ENCODE measurements at regions of chr22 and their contacts with region 1.

Region 1: DNA sequence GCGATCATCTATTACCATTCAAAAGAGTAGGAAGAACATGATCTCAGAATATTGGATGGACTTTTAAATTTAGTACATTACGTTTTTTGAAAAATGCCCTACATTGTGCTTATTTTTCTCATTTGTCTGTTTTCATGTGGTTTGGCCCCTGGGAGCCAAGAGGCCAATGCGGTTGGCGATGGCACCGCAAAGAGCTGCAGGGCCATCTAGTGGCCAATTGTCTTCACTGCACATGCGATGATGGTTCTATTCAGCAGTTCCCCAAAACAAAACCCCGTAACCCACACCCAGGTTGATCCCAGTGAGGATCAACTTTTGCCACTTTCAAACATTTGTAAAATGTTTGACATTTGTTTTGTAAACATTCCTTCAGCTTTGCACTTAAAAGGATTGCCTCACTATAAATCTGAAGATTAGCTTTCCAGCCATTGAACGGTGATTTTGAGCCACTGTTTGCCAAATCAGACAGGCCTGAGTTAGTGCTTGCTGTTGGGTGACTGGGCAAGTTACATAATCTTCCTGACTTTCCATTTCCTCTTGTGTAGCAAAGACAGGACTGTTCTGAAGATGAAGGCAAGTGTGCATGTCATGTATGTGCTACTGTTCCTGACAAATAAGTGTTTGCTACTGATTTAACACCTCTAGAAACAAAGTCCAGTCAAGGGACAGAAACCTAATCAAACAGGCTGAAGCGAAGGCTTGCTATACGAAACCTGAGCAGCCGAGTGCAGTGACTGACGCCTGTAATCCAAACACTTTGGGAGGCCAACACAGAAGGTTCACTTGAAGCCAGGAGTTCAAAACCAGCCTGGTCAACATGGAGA is 29.2 kb upstream of the XBP1 start:
- DNase-seq: peak; percentile 77
- H3K4me3 ChIP-seq: peak overlapping the region in 1 of 2 experiments; percentile 31; a peak in 1 of 4 replicates
- H3K27ac ChIP-seq: no peak overlapping the region
- H3K4me1 ChIP-seq: no peaks in the 10 kb centered on the region
- H3K27me3 ChIP-seq: no peaks in the 10 kb centered on the region
- CTCF ChIP-seq: peak; percentile 98
- EP300 ChIP-seq: no peak
- RAD21 ChIP-seq: peak; percentile 98

Region 2: GRCh38 chr22:28607795-28608194 is 221.8 kb before region 1 on chr22:
- CTCF ChIA-PET with region 1: interaction called, 23 read pairs
- POLR2A ChIA-PET with region 1: no interaction called
- DNase-seq: no peak
- H3K4me3 ChIP-seq: no peak overlapping the region
- H3K27ac ChIP-seq: no peak overlapping the region
- H3K4me1 ChIP-seq: no peaks in the 10 kb centered on the region; a peak in 1 of 4 replicates
- H3K27me3 ChIP-seq: no peaks in the 10 kb centered on the region
- CTCF ChIP-seq: no peak
- EP300 ChIP-seq: no peak
- RAD21 ChIP-seq: no peak

Region 3: GRCh38 chr22:28810821-28811491 is 18.6 kb before region 1 on chr22:
- CTCF ChIA-PET with region 1: interaction called, 12 read pairs
- POLR2A ChIA-PET with region 1: interaction called, 3 read pairs
- DNase-seq: no peak
- H3K4me3 ChIP-seq: no peak overlapping the region
- H3K27ac ChIP-seq: no peak overlapping the region
- H3K4me1 ChIP-seq: no peaks in the 10 kb centered on the region
- H3K27me3 ChIP-seq: no peaks in the 10 kb centered on the region
- CTCF ChIP-seq: no peak
- EP300 ChIP-seq: no peak
- RAD21 ChIP-seq: no peak

Region 4: DNA sequence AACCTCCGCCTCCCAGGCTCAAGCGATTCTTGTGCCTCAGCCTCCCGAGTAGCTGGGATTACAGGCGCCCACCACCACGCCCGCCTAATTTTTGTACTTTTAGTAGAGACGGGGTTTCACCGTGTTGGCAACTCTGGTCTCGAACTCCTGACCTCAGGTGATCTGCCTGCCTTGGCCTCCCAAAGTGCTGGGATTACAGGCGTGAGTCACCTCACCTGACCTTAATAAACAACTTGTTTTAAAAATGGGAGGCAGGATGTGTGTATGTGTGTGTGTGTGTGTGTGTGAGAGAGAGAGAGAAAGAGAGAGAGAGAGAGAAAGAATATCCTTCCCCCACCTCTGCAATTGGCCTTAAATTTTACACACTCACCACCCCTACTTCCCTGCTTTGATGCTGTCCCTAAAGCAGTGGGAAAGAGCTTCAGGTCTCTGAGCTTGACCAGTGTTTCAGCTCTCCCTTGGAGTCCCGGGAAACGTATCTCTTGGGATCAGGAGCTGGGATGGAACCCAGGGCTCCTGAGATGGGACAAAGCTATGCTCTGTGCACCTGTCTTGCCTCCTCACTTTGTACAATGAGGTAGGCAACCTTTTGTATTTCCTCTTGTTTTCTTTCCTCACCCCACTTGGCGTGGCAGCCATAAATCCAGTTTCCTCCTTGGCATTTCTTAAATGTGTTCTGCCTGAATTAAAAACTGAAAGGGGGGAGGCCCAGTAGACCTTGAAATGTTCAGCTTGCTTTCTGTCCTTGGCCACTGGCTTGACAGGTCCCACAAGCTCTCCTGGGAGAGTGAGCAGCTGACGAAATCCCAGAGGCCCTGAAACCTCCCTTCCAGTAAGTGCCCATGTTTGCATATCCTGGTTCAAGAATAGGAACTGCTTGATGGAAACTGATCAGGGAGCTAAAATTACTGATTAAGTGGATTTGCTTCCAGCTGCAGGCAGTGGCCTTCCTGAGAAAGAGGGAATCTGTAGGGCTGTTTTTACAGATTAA is 11.4 kb before region 1 on chr22:
- CTCF ChIA-PET with region 1: interaction called, 37 read pairs
- POLR2A ChIA-PET with region 1: no interaction called
- DNase-seq: peak; percentile 34
- H3K4me3 ChIP-seq: no peak overlapping the region
- H3K27ac ChIP-seq: peak overlapping the region in 1 of 2 experiments; percentile 14; a peak in 1 of 4 replicates
- H3K4me1 ChIP-seq: peaks cover 0 to 6% of the 10 kb centered on the region in 2 experiments; a peak in 1 of 4 replicates
- H3K27me3 ChIP-seq: no peaks in the 10 kb centered on the region
- CTCF ChIP-seq: no peak
- EP300 ChIP-seq: no peak
- RAD21 ChIP-seq: no peak

Region 5: DNA sequence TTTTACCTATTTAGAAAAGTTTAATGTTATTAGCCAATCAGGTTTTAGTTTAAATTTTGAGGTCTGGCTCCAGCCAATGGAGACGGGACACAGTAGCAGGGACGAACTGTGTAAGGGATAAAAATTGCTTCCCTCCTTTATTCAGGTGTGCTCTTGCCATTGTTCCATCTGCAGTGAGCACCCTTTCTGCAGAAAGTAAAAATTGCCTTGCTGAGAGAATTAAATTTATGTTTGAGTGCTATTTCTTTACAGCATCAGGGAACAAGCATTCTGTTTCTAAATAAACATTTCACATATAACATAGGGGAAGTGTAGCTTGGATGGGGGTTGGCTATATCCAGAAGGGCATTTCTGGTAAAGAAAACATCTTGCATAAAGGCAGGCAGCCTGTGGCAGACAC is 17.4 kb after region 1 on chr22:
- CTCF ChIA-PET with region 1: interaction called, 22 read pairs
- POLR2A ChIA-PET with region 1: no interaction called
- DNase-seq: no peak
- H3K4me3 ChIP-seq: no peak overlapping the region
- H3K27ac ChIP-seq: no peak overlapping the region
- H3K4me1 ChIP-seq: no peaks in the 10 kb centered on the region
- H3K27me3 ChIP-seq: no peaks in the 10 kb centered on the region
- CTCF ChIP-seq: no peak
- EP300 ChIP-seq: no peak
- RAD21 ChIP-seq: no peak

Measured in SK-N-SH (cell line).